Posterior vena cava (tissue), 2 donors: ENCODE measurements at regions of chr14 and their contacts with region 1.

Region 1: GRCh38 chr14:76968621-76969063 is 59.9 kb downstream of the IRF2BPL start:
- DNase-seq: no peak

Region 2: GRCh38 chr14:77014004-77014604 is 45.5 kb after region 1 on chr14:
- intact Hi-C with region 1: loop called in 1 of 2 experiments (anchors 5 kb)
- DNase-seq: no peak

Region 3: GRCh38 chr14:77028384-77029231 is 60.0 kb after region 1 on chr14 and contains the start of gene IRF2BPL:
- intact Hi-C with region 1: loop called in 1 of 2 experiments (anchors 1 kb)
- DNase-seq: peak; percentile 100
- total RNA-seq, gene IRF2BPL: 35.7 to 43.3 TPM